Gastrocnemius medialis (tissue), 4 donors: ENCODE measurements at regions of chr5 and their contacts with region 1.

Region 1: DNA sequence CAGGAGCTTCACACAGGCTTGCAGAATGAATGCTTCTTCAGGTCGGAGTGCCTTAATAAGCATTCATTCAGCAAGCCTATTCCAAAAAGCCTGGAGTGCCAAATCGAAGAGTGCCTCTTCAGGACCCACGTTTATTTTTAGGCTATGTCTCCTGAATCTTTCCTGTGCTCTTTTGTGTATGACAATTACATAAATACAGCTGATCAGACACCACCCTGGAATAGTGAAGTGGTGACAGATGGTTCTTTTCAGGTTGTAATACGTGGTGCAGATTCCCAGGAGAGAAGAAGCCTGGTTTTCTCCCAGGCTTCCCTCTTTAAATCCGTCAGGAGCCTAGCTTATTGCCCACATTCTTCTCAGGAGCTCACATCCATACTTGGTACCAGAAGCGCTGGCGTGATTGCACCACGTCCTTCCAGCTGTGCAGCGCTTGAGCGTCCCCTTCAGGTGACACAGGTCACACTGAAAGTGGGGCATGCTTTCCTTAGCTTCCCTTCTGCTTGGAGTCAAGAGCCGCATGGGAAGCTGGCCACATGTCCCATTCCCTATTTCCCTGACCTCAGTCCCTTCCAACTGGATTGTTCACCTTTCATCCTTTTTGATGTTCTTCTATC is 123.1 kb downstream of the ADCY2 start:
- DNase-seq: peak; percentile 56 to 81
- ATAC-seq: peak; percentile 95 to 97
- H3K4me3 ChIP-seq: no peak overlapping the region
- H3K27ac ChIP-seq: peak overlapping the region; percentile 27 to 59 (median 50)
- H3K4me1 ChIP-seq: peaks cover 4 to 39% of the 10 kb centered on the region in 2 donors
- H3K27me3 ChIP-seq: no peaks in the 10 kb centered on the region
- CTCF ChIP-seq: peak; percentile 68 to 90 (median 82)
- POLR2A ChIP-seq: no peak

Region 2: GRCh38 chr5:6820851-6821479 is 698.1 kb before region 1 on chr5:
- in situ Hi-C with region 1: no loop called
- intact Hi-C with region 1: loop called (anchors 10 kb)
- DNase-seq: no peak
- ATAC-seq: no peak
- H3K4me3 ChIP-seq: no peak overlapping the region
- H3K27ac ChIP-seq: no peak overlapping the region
- H3K4me1 ChIP-seq: peaks cover under 1 to 4% of the 10 kb centered on the region in 2 donors
- H3K27me3 ChIP-seq: no peaks in the 10 kb centered on the region
- CTCF ChIP-seq: peak; percentile 16 to 72 (median 45)
- POLR2A ChIP-seq: no peak

Region 3: DNA sequence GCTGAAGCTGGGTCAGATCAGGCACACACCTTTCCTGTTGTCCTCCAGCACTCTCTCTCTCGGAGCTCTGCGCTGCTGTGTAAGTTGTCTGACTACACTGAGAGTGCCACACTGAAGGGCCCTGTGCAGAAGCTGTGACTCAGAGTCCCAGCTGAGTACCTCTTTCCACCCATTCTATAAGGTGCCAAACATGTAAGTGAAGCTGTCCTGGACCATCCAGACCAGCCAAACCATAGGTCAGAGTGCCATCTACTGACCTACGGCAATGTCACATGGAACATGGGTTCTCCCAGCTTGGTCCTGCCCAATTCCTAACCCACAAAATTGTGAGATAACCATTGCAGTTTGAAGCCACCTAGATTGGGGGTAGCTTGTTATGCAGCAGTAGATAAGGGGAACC is 54.9 kb before region 1 on chr5:
- in situ Hi-C with region 1: no loop called
- intact Hi-C with region 1: loop called (anchors 1 kb)
- DNase-seq: peak; percentile 44 to 67
- ATAC-seq: peak; percentile 98 to 99
- H3K4me3 ChIP-seq: no peak overlapping the region
- H3K27ac ChIP-seq: peak overlapping the region; percentile 21 to 53 (median 39)
- H3K4me1 ChIP-seq: peaks cover 25 to 36% of the 10 kb centered on the region in 2 donors
- H3K27me3 ChIP-seq: no peaks in the 10 kb centered on the region
- CTCF ChIP-seq: peak in 4 of 5 experiments; percentile 13 to 38 (median 28)
- POLR2A ChIP-seq: no peak

Region 4: GRCh38 chr5:7540771-7541485 is 21.9 kb after region 1 on chr5:
- in situ Hi-C with region 1: no loop called
- intact Hi-C with region 1: no loop called
- DNase-seq: no peak
- ATAC-seq: no peak
- H3K4me3 ChIP-seq: no peak overlapping the region
- H3K27ac ChIP-seq: no peak overlapping the region
- H3K4me1 ChIP-seq: peaks cover 4 to 12% of the 10 kb centered on the region in 2 donors
- H3K27me3 ChIP-seq: no peaks in the 10 kb centered on the region
- CTCF ChIP-seq: no peak
- POLR2A ChIP-seq: no peak